CD4-positive, alpha-beta memory T cell (primary cell): ENCODE measurements at regions of chr12 and their contacts with region 1.

Region 1: GRCh38 chr12:51994959-51995358 is 11.8 kb upstream of the TAMALIN start:
- DNase-seq: no peak
- H3K4me3 ChIP-seq: no peak overlapping the region
- H3K4me3 Mint-ChIP-seq: no peak overlapping the region
- H3K27ac ChIP-seq: no peak overlapping the region
- H3K27ac Mint-ChIP-seq: no peak overlapping the region
- H3K4me1 ChIP-seq: no peaks in the 10 kb centered on the region
- H3K4me1 Mint-ChIP-seq: peaks cover 3 to 7% (median 5%) of the 10 kb centered on the region in 4 donors
- H3K27me3 ChIP-seq: no peaks in the 10 kb centered on the region
- H3K27me3 Mint-ChIP-seq: no peaks in the 10 kb centered on the region

Region 2: GRCh38 chr12:51970904-51971646 is 23.9 kb before region 1 on chr12:
- CTCF ChIA-PET with region 1: interaction called, 19 read pairs
- POLR2A ChIA-PET with region 1: no interaction called
- intact Hi-C with region 1: no loop called
- DNase-seq: peak; percentile 50 to 72 (median 53)
- H3K4me3 ChIP-seq: no peak overlapping the region
- H3K4me3 Mint-ChIP-seq: peak overlapping the region; percentile 31 to 86 (median 66)
- H3K27ac ChIP-seq: peak overlapping the region; percentile 12
- H3K27ac Mint-ChIP-seq: peak overlapping the region; percentile 66 to 91 (median 84)
- H3K4me1 ChIP-seq: peaks cover 62% of the 10 kb centered on the region
- H3K4me1 Mint-ChIP-seq: peaks cover 56 to 72% (median 62%) of the 10 kb centered on the region in 4 donors
- H3K27me3 ChIP-seq: no peaks in the 10 kb centered on the region
- H3K27me3 Mint-ChIP-seq: no peaks in the 10 kb centered on the region

Region 3: GRCh38 chr12:51980051-51980808 is 14.7 kb before region 1 on chr12:
- CTCF ChIA-PET with region 1: interaction called, 19 read pairs
- POLR2A ChIA-PET with region 1: no interaction called
- intact Hi-C with region 1: no loop called
- DNase-seq: peak; percentile 63 to 72 (median 67)
- H3K4me3 ChIP-seq: no peak overlapping the region
- H3K4me3 Mint-ChIP-seq: peak overlapping the region in 1 of 8 donors; percentile 44
- H3K27ac ChIP-seq: no peak overlapping the region
- H3K27ac Mint-ChIP-seq: peak overlapping the region in 6 of 7 donors; percentile 10 to 75 (median 42)
- H3K4me1 ChIP-seq: peaks cover 17% of the 10 kb centered on the region
- H3K4me1 Mint-ChIP-seq: peaks cover 19 to 35% (median 26%) of the 10 kb centered on the region in 4 donors
- H3K27me3 ChIP-seq: no peaks in the 10 kb centered on the region
- H3K27me3 Mint-ChIP-seq: no peaks in the 10 kb centered on the region

Region 4: GRCh38 chr12:52010152-52010622 is 15.2 kb after region 1 on chr12:
- CTCF ChIA-PET with region 1: interaction called, 1,048 read pairs
- POLR2A ChIA-PET with region 1: interaction called, 14 read pairs
- intact Hi-C with region 1: no loop called
- DNase-seq: no peak
- H3K4me3 ChIP-seq: no peak overlapping the region
- H3K4me3 Mint-ChIP-seq: no peak overlapping the region
- H3K27ac ChIP-seq: no peak overlapping the region
- H3K27ac Mint-ChIP-seq: peak overlapping the region in 4 of 7 donors; percentile 66 to 89 (median 76)
- H3K4me1 ChIP-seq: peaks cover 28% of the 10 kb centered on the region
- H3K4me1 Mint-ChIP-seq: peaks cover 12 to 48% (median 24%) of the 10 kb centered on the region in 4 donors
- H3K27me3 ChIP-seq: no peaks in the 10 kb centered on the region
- H3K27me3 Mint-ChIP-seq: peaks cover 0 to 2% of the 10 kb centered on the region in 2 donors

Region 5: GRCh38 chr12:52050761-52051541 is 56.0 kb after region 1 on chr12 and contains the start of gene NR4A1:
- CTCF ChIA-PET with region 1: no interaction called
- POLR2A ChIA-PET with region 1: no interaction called
- intact Hi-C with region 1: no loop called
- DNase-seq: peak; percentile 98 to 99 (median 99)
- H3K4me3 ChIP-seq: peak within 1 kb of the TSS; percentile 84 to 86
- H3K4me3 Mint-ChIP-seq: peak within 1 kb of the TSS; percentile 87 to 96 (median 92)
- H3K27ac ChIP-seq: peak within 1 kb of the TSS; percentile 95
- H3K27ac Mint-ChIP-seq: peak within 1 kb of the TSS; percentile 98 to 100 (median 99)
- H3K4me1 ChIP-seq: peaks cover 33% of the 10 kb centered on the region
- H3K4me1 Mint-ChIP-seq: peaks cover 18 to 45% (median 31%) of the 10 kb centered on the region in 4 donors
- H3K27me3 ChIP-seq: no peaks in the 10 kb centered on the region
- H3K27me3 Mint-ChIP-seq: no peaks in the 10 kb centered on the region
- total RNA-seq, gene NR4A1: 1.1 to 1.3 TPM

Region 6: GRCh38 chr12:52082988-52083637 is 88.2 kb after region 1 on chr12:
- CTCF ChIA-PET with region 1: interaction called, 12 read pairs
- POLR2A ChIA-PET with region 1: no interaction called
- intact Hi-C with region 1: loop called (anchors 1 kb)
- DNase-seq: peak; percentile 58 to 71 (median 66)
- H3K4me3 ChIP-seq: no peak overlapping the region
- H3K4me3 Mint-ChIP-seq: peak overlapping the region in 1 of 8 donors; percentile 15
- H3K27ac ChIP-seq: no peak overlapping the region
- H3K27ac Mint-ChIP-seq: peak overlapping the region in 5 of 7 donors; percentile 17 to 79 (median 57)
- H3K4me1 ChIP-seq: peaks cover 8% of the 10 kb centered on the region
- H3K4me1 Mint-ChIP-seq: peaks cover 3 to 11% (median 7%) of the 10 kb centered on the region in 4 donors
- H3K27me3 ChIP-seq: no peaks in the 10 kb centered on the region
- H3K27me3 Mint-ChIP-seq: peaks cover 8 to 13% of the 10 kb centered on the region in 2 donors